AG04450 (cell line): ENCODE measurements at regions of chr1 and their contacts with region 1.

Region 1: DNA sequence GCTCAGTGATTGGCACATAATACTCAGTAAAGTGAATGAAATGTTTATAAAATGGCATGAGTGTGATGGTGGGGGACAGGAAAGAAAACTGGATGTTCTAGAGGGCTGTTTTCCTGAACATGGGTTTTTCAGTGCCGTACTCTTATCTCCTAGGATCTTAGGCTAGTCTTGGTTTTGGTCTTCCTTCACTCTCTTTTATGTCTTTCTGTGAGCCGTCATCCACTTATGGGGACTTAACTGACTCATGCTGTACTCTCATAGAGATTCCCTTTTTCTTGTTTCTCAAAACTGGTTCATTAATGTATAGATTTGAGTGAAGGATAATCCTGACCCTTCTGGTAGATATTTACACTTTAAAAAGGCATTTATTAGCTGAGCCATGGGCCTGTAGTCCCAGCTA is 16.6 kb downstream of the AGO3 start:
- DNase-seq: no peak
- H3K4me3 ChIP-seq: no peak overlapping the region
- H3K27ac ChIP-seq: no peak overlapping the region
- H3K27me3 ChIP-seq: no peaks in the 10 kb centered on the region
- CTCF ChIP-seq: no peak

Region 2: DNA sequence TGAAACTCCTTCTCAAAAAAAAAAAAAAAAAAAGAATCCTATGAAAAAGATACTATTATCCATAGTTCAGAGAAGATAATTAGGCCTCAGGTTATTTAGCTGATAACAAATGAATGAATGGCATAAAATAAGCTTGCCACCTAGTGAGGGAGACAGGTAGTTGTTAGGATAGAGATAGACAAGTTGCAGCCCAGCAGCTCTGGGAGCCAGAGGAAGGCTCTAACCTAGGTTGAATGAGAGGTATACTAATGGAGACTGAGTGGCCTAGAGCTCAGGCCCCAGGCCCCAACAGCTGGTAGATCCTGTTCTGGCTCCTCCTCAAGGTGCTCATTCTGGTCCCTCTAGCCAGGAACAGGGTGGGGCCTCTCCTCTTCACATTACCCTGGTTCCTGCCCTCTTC is 1707.7 kb after region 1 on chr1:
- CTCF ChIA-PET with region 1: interaction called, 10 read pairs
- POLR2A ChIA-PET with region 1: no interaction called
- DNase-seq: no peak
- H3K4me3 ChIP-seq: no peak overlapping the region
- H3K27ac ChIP-seq: no peak overlapping the region
- H3K27me3 ChIP-seq: peaks cover 12% of the 10 kb centered on the region
- CTCF ChIP-seq: no peak